Sigmoid colon (tissue), 7 donors: ENCODE measurements at regions of chr14 and their contacts with region 1.

Region 1: DNA sequence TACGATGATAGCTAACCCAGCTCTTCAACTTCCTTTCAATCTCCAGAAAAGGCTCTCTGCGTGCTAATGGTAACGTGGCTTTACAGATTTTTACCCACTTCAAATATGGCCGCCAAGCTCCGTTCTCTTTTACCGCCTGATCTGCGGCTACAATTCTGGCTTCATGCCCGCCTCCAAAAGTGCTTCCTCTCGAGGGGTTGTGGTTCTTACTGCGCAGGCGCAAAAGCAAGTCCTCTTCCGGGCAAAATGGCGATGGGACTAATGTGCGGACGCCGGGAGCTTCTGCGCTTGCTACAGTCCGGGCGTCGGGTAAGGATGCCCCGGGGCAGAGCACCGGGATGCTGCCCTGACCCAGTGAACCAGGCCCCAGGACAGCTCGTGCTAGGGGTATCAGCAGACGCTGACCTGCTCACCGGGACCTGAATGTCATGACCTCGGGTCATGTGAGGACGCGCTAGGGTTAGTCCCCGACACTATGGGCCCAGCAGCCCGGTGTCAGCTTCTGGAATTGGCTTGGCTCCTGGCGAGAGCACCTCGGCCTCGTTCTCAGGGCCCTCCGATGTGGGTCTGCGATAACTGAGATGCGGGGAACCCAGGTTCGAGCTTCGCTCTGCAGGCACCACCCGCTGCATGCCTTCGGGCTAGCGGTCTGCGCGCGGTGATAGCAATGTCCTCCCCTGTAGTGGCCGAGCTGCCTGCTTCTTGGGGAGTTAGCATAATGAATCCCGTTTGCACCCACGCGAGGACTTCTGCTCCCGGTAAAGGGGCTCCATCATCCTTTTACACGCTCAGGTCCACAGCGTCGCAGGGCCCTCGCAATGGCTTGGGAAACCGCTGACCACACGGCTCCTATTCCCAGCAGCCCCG is at the start of gene OXA1L:
- DNase-seq: peak; percentile 99
- H3K4me3 ChIP-seq: peak within 1 kb of the TSS; percentile 81 to 87 (median 85)
- H3K27ac ChIP-seq: peak within 1 kb of the TSS; percentile 84 to 89 (median 87)
- H3K4me1 ChIP-seq: peaks cover 0 to 22% (median 18%) of the 10 kb centered on the region in 4 donors
- H3K27me3 ChIP-seq: no peaks in the 10 kb centered on the region
- CTCF ChIP-seq: no peak
- EP300 ChIP-seq: no peak
- POLR2A ChIP-seq: peak; percentile 25 to 73
- total RNA-seq, gene OXA1L: 95.2 to 108 (median 102) TPM

Region 2: DNA sequence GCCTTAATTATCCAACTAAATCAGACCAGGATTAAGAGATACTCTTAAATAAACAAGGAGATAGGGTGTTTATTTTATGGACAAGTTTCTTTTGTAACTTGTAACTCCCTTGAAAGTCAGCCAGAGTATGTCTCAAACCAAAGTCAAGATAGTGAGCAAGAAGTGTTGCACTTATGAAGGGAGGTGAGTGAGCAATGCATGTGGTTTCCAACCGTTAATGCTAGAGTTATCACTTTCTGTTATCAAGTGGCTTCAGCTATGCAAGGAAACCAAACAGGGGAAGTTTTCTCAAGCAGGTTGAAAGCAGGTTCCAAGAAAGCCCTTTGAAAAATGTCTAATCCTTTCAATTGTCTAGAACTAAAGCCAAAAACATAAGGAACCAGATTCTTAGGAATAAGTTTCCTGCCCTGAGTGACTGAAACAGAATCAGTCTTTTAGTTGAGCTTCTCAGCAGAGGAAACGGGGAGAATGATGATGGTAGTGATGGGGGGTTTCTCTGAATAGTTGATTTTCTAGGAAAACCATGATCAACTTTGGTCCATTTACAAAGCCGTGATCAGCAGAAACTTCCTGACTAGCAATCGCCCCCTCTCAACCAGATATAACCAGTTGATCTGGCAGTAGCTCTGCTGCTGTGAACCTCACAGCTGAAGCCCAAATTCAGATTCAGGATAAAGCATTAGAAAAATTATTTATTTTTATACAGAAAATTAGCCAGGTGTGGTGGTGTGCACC is 306.1 kb before region 1 on chr14:
- intact Hi-C with region 1: no loop called
- DNase-seq: no peak
- H3K4me3 ChIP-seq: no peak overlapping the region
- H3K27ac ChIP-seq: no peak overlapping the region
- H3K4me1 ChIP-seq: peaks cover 0 to 19% (median 12%) of the 10 kb centered on the region in 4 donors
- H3K27me3 ChIP-seq: no peaks in the 10 kb centered on the region
- CTCF ChIP-seq: no peak
- EP300 ChIP-seq: no peak
- POLR2A ChIP-seq: no peak

Region 3: DNA sequence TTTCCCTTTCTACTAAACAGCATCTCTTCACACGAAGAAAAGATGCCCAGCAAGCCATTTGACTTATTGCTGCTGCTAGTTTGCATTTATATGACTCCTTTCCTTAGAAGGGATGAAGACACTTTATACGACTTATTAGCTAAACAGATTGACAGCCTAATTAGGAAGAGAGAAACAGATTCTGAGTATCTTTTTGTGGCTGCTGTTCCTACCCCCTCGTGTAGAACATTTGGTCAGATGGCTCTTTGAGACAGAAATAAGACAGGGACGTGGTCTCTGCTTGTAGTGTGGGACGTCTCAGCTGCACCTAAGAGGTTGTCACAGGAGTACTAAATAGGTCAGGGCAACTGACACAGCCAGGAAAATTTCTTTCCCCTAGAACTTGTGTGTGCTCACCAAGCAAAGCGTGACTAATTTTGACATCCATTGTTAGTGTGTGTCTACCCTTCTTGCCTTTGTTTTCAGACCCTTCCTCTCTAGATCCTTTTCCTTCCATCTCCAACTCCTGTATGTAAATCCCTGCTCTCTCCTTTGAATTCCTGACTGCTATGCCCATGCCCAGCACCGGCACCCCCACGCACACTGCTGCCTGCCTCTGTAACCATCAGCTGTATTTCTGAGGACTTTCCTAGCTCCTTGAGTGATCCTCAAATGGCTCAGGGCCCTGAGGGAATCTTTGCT is 260.9 kb before region 1 on chr14:
- intact Hi-C with region 1: no loop called
- DNase-seq: no peak
- H3K4me3 ChIP-seq: no peak overlapping the region
- H3K27ac ChIP-seq: no peak overlapping the region
- H3K4me1 ChIP-seq: peaks cover 0 to 23% (median 18%) of the 10 kb centered on the region in 4 donors
- H3K27me3 ChIP-seq: no peaks in the 10 kb centered on the region
- CTCF ChIP-seq: no peak
- EP300 ChIP-seq: no peak
- POLR2A ChIP-seq: no peak

Region 4: DNA sequence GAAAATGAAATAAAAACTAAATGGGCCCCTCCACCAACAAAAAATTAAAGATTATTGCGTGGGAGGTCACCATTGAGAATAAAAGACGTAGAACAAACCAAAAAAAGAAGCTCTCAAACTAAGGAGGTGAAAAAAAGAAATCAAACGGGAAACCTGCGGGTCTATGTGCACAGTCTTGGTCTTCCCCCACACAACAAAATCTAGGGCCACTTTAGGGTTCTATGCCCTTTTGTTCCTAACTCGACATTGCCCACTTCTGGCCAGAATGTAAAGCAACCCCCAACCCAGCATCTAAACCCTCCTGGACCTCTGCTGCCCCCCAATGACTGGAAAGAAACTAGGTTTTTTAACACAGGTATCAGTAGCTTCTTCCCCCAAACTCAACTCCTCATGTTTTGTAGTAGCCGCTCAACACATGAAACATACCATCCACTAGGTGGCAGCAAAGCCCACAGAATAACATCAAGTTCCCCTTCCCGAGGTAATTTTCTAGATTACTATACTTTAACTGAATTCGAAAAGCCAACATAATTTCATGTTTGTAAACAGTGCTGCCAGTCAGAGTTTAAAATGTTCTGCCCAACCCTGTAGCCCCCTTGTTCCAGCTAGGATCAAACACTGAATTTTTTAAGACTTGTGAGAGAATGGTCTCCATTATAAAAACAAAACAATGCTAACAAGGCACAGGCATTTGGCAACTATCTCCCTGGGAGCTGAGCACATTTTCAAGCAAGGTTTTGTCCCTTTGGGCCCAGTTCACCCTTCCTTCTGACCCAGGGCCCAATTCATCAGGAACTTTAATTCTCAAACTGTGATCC is 196.3 kb before region 1 on chr14:
- intact Hi-C with region 1: loop called (anchors 5 kb)
- DNase-seq: peak; percentile 84
- H3K4me3 ChIP-seq: no peak overlapping the region
- H3K27ac ChIP-seq: peak overlapping the region; percentile 12 to 69 (median 28)
- H3K4me1 ChIP-seq: peaks cover 0 to 32% (median 13%) of the 10 kb centered on the region in 4 donors
- H3K27me3 ChIP-seq: no peaks in the 10 kb centered on the region
- CTCF ChIP-seq: peak; percentile 76 to 85 (median 78)
- EP300 ChIP-seq: no peak
- POLR2A ChIP-seq: no peak

Region 5: GRCh38 chr14:22598099-22598899 is 168.4 kb before region 1 on chr14 and contains the start of gene ABHD4:
- intact Hi-C with region 1: loop called (anchors 10 kb)
- DNase-seq: peak; percentile 91
- H3K4me3 ChIP-seq: peak within 1 kb of the TSS; percentile 69 to 81 (median 71)
- H3K27ac ChIP-seq: peak within 1 kb of the TSS; percentile 84 to 93 (median 90)
- H3K4me1 ChIP-seq: peaks cover 0 to 27% (median 22%) of the 10 kb centered on the region in 4 donors
- H3K27me3 ChIP-seq: no peaks in the 10 kb centered on the region
- CTCF ChIP-seq: no peak
- EP300 ChIP-seq: no peak
- POLR2A ChIP-seq: peak; percentile 39 to 76
- total RNA-seq, gene ABHD4: 17.4 to 20.4 (median 18.7) TPM

Region 6: GRCh38 chr14:22699801-22700564 is 66.7 kb before region 1 on chr14:
- intact Hi-C with region 1: no loop called
- DNase-seq: no peak
- H3K4me3 ChIP-seq: no peak overlapping the region
- H3K27ac ChIP-seq: no peak overlapping the region
- H3K4me1 ChIP-seq: no peaks in the 10 kb centered on the region
- H3K27me3 ChIP-seq: peaks cover 0 to 3% (median 0%) of the 10 kb centered on the region in 3 donors
- CTCF ChIP-seq: no peak
- EP300 ChIP-seq: no peak
- POLR2A ChIP-seq: no peak

Region 7: GRCh38 chr14:22715186-22715812 is 51.4 kb before region 1 on chr14:
- intact Hi-C with region 1: loop called (anchors 5 kb)
- DNase-seq: no peak
- H3K4me3 ChIP-seq: no peak overlapping the region
- H3K27ac ChIP-seq: no peak overlapping the region
- H3K4me1 ChIP-seq: no peaks in the 10 kb centered on the region
- H3K27me3 ChIP-seq: no peaks in the 10 kb centered on the region
- CTCF ChIP-seq: no peak
- EP300 ChIP-seq: no peak
- POLR2A ChIP-seq: no peak